Esophagus muscularis mucosa (tissue), 4 donors: ENCODE measurements at regions of chr7 and their contacts with region 1.

Region 1: DNA sequence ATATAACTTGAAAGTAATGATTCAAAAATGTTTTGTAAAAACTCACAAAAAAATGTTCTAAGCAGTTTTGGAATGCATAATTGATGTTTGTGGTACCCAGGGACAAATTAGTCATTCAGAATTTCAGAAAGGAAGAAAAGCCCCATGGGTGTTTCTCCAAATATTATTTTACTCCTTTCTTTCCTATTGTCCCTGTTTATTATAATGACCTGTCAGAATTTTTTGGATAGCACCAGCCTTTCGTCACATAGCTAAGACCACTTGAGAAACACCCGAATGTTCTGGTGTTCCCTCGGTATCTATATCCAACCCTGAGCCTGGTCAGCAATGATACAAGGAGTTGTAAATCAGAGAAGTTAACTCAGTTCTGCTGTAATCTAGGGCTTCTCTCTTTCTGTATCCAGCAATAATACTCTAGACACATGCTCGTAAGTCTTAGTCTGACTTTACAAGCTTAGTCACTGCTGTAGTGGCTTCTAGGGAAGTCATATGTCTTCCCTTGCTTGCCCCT is 64.8 kb upstream of the MEOX2 start:
- DNase-seq: no peak
- H3K4me3 ChIP-seq: no peak overlapping the region
- H3K27ac ChIP-seq: peak overlapping the region; percentile 27 to 40 (median 34)
- H3K4me1 ChIP-seq: peaks cover 22 to 82% (median 61%) of the 10 kb centered on the region in 4 donors
- H3K27me3 ChIP-seq: no peaks in the 10 kb centered on the region
- CTCF ChIP-seq: no peak
- EP300 ChIP-seq: no peak
- POLR2A ChIP-seq: no peak

Region 2: GRCh38 chr7:15795393-15795792 is 44.1 kb after region 1 on chr7:
- intact Hi-C with region 1: no loop called
- DNase-seq: no peak
- H3K4me3 ChIP-seq: no peak overlapping the region
- H3K27ac ChIP-seq: no peak overlapping the region
- H3K4me1 ChIP-seq: peaks cover 0 to 10% (median 0%) of the 10 kb centered on the region in 4 donors
- H3K27me3 ChIP-seq: no peaks in the 10 kb centered on the region
- CTCF ChIP-seq: no peak
- EP300 ChIP-seq: no peak
- POLR2A ChIP-seq: no peak

Region 3: DNA sequence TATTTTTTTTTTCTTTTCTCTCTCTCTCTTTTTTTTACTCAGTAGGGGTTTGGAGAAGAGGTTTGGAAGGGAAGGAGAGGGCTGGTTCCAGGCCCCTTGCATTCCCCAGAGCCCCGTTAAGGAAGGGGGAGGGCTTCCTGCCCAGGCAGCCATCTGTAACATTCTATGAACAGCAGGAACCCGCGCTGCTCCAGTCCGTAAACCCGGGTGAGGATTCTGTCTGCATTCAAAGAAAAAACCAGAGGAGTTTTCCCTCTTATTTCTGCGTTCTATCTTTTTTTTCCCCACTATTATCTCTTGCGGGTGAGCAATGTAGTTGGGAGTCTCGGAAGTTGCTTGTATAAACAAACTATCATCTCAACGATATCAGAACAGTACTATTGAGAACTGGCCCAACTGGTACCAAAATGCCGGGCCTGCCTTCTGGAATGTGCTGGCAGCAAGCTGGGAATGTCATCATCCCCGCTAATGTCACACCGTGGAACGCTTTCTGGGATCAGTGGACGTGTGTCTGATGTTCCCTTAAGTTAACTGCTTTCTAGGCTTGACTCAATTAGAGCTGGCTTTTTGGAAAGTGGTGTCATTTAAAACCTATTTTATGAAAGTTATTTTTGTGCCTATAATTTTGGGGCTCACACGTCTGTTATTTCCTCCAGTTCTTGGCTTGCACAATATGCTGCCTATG is 88.3 kb after region 1 on chr7:
- intact Hi-C with region 1: loop called (anchors 10 kb)
- DNase-seq: no peak
- H3K4me3 ChIP-seq: peak overlapping the region; percentile 35 to 54 (median 44)
- H3K27ac ChIP-seq: peak overlapping the region; percentile 64 to 78 (median 70)
- H3K4me1 ChIP-seq: peaks cover 17 to 30% (median 26%) of the 10 kb centered on the region in 4 donors
- H3K27me3 ChIP-seq: no peaks in the 10 kb centered on the region
- CTCF ChIP-seq: no peak
- EP300 ChIP-seq: no peak
- POLR2A ChIP-seq: no peak